ENCODE measurements at regions of chr7 and their contacts with region 1.

Region 1: GRCh38 chr7:71457846-71458590 is 326.1 kb downstream of the GALNT17 start:
- DNase-seq: no peak
- H3K4me3 ChIP-seq: no peak overlapping the region
- H3K27ac ChIP-seq: no peak overlapping the region
- H3K4me1 ChIP-seq: peaks cover 0 to 5% (median 0%) of the 10 kb centered on the region in 4 donors
- H3K27me3 ChIP-seq: no peaks in the 10 kb centered on the region
- CTCF ChIP-seq: no peak

Region 2: DNA sequence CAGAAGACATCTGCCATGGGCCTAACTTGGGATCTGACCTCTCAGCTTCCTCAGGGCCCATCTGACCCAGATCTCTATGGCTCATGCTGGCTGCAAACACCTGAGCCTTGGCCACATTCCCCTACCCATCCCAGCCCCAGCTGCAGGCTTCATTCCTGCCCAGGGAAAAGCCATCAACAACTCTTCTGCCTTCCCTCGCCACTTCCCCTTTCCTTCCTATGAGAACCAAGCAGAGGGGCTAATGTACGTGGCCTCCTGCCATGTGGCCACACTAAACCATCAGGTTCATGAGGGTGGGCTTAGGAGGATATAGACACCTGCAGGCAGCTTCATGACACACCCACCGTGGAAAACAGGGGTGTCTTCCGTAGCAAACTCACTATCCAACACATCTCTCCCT is 13.9 kb before region 1 on chr7:
- intact Hi-C with region 1: loop called (anchors 1 kb)
- DNase-seq: no peak
- H3K4me3 ChIP-seq: no peak overlapping the region
- H3K27ac ChIP-seq: no peak overlapping the region
- H3K4me1 ChIP-seq: peaks cover 0 to 15% (median 4%) of the 10 kb centered on the region in 4 donors
- H3K27me3 ChIP-seq: no peaks in the 10 kb centered on the region
- CTCF ChIP-seq: no peak